ENCODE measurements at regions of chr17 and their contacts with region 1.

Region 1: GRCh38 chr17:43388359-43389045 is 10.3 kb upstream of the ARL4D start:
- DNase-seq: peak; percentile 99

Region 2: GRCh38 chr17:43477832-43478634 is 89.5 kb after region 1 on chr17:
- in situ Hi-C with region 1: loop called (anchors 10 kb)
- DNase-seq: no peak

Region 3: GRCh38 chr17:43576563-43577229 is 188.2 kb after region 1 on chr17:
- in situ Hi-C with region 1: no loop called
- DNase-seq: peak; percentile 73

Measured in KBM-7 (cell line).